ENCODE measurements at regions of chr1 and their contacts with region 1.

Region 1: GRCh38 chr1:152440635-152441471 is 26.8 kb upstream of the CRNN start:
- DNase-seq: peak; percentile 75 to 76
- H3K4me3 ChIP-seq: no peak overlapping the region
- H3K4me3 Mint-ChIP-seq: no peak overlapping the region
- H3K27ac Mint-ChIP-seq: no peak overlapping the region
- H3K4me1 ChIP-seq: no peaks in the 10 kb centered on the region
- H3K4me1 Mint-ChIP-seq: no peaks in the 10 kb centered on the region
- H3K27me3 ChIP-seq: no peaks in the 10 kb centered on the region
- H3K27me3 Mint-ChIP-seq: peaks cover 25% of the 10 kb centered on the region
- CTCF ChIP-seq: peak; percentile 68 to 81

Region 2: DNA sequence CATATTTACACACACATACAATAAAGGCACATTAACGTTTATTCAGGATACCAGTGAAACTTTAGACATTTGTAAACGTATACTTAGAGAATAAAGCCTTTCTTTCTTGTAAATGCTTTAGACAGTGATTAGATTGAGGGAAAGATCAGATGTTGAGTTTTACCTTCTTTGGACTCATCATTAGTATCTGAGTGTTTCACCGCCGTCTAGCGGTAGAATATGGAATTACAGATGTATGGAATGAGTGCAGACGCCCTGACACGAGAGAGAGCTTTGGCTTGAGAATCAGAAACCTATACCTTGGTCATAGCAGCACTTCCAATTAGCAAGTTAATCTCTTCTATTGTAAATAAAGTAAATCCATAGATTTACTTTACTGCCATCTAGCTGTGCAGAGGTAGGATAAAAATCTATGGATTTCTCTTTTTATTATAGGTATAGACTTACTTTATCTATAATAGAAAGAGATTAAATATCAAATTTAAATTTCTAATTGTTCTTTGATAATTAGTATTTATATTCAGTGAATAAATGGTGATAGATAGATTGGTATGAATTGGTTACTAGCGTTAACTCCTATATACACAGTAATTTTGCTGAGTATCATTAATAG is 93.6 kb before region 1 on chr1:
- CTCF ChIA-PET with region 1: no interaction called
- POLR2A ChIA-PET with region 1: no interaction called
- intact Hi-C with region 1: loop called (anchors 1 kb)
- DNase-seq: peak; percentile 42 to 72
- H3K4me3 ChIP-seq: no peak overlapping the region
- H3K4me3 Mint-ChIP-seq: no peak overlapping the region
- H3K27ac Mint-ChIP-seq: no peak overlapping the region
- H3K4me1 ChIP-seq: no peaks in the 10 kb centered on the region
- H3K4me1 Mint-ChIP-seq: no peaks in the 10 kb centered on the region
- H3K27me3 ChIP-seq: no peaks in the 10 kb centered on the region
- H3K27me3 Mint-ChIP-seq: peaks cover 5% of the 10 kb centered on the region
- CTCF ChIP-seq: peak; percentile 79 to 82

Region 3: DNA sequence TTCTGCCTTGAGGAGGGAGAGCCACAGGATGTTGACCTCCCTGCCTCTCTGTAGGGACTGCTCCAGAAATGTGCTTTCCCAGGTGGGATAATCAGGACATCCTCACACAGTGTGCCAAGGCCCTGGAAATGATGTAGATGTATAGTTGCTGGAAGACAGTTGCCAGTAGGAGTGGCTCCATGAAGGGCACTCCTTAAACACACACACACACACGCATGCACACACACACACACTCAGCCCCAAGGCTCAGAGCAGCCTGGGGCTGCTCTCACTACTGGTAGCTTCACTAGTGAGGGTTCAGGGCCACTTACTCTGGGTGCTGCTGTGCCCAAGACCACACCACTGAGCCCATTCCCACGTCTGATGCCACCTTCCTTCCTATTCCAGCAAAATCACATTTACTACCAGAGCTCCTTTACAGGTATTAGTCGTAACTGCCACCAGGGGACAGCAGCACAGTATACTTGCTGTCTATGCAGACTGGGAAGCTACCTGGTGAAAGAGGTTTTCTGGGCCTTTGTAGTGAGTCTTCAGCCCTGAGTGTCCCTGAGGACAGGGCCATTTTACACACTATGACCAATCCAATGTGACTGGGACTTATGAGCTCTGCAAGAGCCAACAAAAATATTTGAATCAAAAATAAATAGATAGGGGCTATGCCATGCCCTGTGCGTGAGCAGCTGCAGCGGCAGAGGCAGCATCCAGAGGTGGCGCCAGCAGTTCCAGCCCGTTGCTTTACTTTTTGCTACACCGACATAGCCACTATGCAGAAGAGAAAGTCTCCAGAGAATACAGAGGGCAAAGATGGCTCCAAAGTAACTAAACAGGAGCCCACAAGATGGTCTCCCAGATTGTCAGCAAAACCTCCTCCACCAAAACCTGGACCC is 41.8 kb before region 1 on chr1:
- CTCF ChIA-PET with region 1: interaction called, 21 read pairs
- POLR2A ChIA-PET with region 1: no interaction called
- intact Hi-C with region 1: loop called (anchors 1 kb)
- DNase-seq: peak; percentile 50 to 55
- H3K4me3 ChIP-seq: no peak overlapping the region
- H3K4me3 Mint-ChIP-seq: no peak overlapping the region
- H3K27ac Mint-ChIP-seq: no peak overlapping the region
- H3K4me1 ChIP-seq: no peaks in the 10 kb centered on the region
- H3K4me1 Mint-ChIP-seq: no peaks in the 10 kb centered on the region
- H3K27me3 ChIP-seq: no peaks in the 10 kb centered on the region
- H3K27me3 Mint-ChIP-seq: peaks cover 11% of the 10 kb centered on the region
- CTCF ChIP-seq: peak; percentile 61 to 79

Region 4: DNA sequence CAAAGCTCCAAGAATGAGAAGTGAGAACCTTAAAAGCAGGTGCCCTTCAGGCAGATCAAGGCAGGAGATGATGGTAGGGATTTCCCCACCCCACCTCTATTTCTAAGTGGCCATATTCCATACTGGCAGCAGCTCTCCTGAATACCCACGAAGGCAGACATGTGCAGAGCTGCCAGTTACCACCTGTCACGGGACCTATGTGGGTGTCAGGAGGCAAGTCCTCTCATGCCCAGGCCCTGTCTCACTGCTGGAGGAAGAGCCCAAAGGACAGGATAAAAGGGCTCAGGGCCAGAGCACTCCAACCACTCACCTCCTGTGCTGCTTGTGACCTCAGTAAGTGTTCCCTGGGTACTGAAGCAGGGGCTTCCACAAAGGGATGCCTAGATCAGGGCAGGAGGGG is 370.2 kb after region 1 on chr1:
- CTCF ChIA-PET with region 1: no interaction called
- POLR2A ChIA-PET with region 1: no interaction called
- intact Hi-C with region 1: no loop called
- DNase-seq: no peak
- H3K4me3 ChIP-seq: no peak overlapping the region
- H3K4me3 Mint-ChIP-seq: no peak overlapping the region
- H3K27ac Mint-ChIP-seq: no peak overlapping the region
- H3K4me1 ChIP-seq: no peaks in the 10 kb centered on the region
- H3K4me1 Mint-ChIP-seq: no peaks in the 10 kb centered on the region
- H3K27me3 ChIP-seq: no peaks in the 10 kb centered on the region
- H3K27me3 Mint-ChIP-seq: peaks cover 13% of the 10 kb centered on the region
- CTCF ChIP-seq: no peak